ENCODE measurements at regions of chr1 and their contacts with region 1.

Region 1: DNA sequence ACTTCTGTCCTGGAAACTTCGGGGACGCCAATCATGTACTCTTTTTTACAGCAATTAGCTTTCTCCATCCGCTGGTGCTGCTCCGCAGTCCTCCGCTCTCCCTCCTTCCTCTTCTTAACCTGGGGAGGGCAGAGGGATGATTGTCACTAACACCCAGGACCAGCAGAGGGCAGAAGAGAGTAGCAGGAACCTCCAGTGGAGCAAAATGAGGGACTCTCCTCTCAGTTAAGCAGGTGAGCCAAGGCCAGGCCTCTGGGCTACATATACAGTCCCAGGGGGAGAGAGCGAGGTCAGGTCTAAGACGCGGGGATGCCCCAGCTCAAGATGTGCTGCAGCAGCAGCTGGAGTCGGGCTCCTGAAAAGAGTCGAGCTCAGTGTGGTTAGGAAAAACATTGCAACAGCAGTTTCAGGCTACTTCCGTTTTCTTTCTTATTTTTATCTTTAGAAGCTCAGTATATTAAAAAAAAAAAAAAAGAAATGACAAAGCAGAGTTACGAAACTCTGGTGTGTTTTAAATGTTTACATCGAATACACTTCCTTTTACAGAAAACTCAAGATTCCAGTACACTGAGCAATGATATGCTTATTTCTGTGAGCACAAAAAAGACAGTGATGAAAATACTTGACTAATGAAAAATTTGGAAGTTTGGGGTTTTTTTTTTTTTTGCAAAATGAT is 25.7 kb upstream of the NLRP3 start:
- DNase-seq: peak; percentile 92
- ATAC-seq: peak; percentile 98
- H3K4me3 ChIP-seq: no peak overlapping the region
- H3K27ac ChIP-seq: no peak overlapping the region
- H3K4me1 ChIP-seq: peaks cover 33% of the 10 kb centered on the region
- H3K27me3 ChIP-seq: no peaks in the 10 kb centered on the region
- CTCF ChIP-seq: peak; percentile 92 to 95 (median 94)
- EP300 ChIP-seq: peak; percentile 57 to 91; a peak in 3 of 4 replicates
- POLR2A ChIP-seq: no peak
- RAD21 ChIP-seq: peak; percentile 94

Region 2: GRCh38 chr1:247222840-247223239 is 167.4 kb before region 1 on chr1:
- CTCF ChIA-PET with region 1: no interaction called
- POLR2A ChIA-PET with region 1: no interaction called
- RAD21 ChIA-PET with region 1: no interaction called
- SMC1A ChIA-PET with region 1: no interaction called
- in situ Hi-C with region 1: no loop called
- intact Hi-C with region 1: no loop called
- DNase-seq: no peak
- ATAC-seq: no peak; the same call in 2 of the 3 replicates
- H3K4me3 ChIP-seq: no peak overlapping the region
- H3K27ac ChIP-seq: no peak overlapping the region
- H3K4me1 ChIP-seq: no peaks in the 10 kb centered on the region
- H3K27me3 ChIP-seq: no peaks in the 10 kb centered on the region
- CTCF ChIP-seq: no peak
- EP300 ChIP-seq: no peak
- POLR2A ChIP-seq: no peak
- RAD21 ChIP-seq: no peak

Region 3: DNA sequence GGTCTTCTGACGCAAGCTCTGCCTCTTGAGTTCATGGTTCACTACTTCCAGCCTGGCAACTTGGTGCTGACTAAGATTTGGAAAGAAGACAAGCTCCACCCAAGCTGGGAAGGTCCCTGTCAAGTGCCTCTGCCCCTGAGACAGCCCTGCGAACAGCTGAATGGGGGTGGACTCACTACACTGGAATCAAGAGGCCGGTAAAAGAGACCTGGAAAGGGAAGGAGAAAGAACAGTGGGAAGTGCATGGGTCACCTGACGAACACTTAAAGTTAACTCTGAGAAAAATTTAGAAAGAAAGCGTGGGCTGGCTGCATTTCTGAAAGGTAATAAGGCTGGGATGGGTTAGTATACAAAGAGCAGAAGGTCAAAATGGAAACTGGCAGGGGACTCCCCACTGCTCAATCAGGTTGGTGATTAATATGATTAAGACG is 32.5 kb before region 1 on chr1:
- CTCF ChIA-PET with region 1: interaction called, 3 read pairs
- POLR2A ChIA-PET with region 1: interaction called, 3 read pairs
- RAD21 ChIA-PET with region 1: interaction called, 12 read pairs
- SMC1A ChIA-PET with region 1: interaction called, 8 read pairs
- in situ Hi-C with region 1: no loop called
- intact Hi-C with region 1: no loop called
- DNase-seq: peak; percentile 77
- ATAC-seq: peak; percentile 92
- H3K4me3 ChIP-seq: peak overlapping the region; percentile 25; the same call in 1 of the 2 replicates
- H3K27ac ChIP-seq: no peak overlapping the region
- H3K4me1 ChIP-seq: peaks cover 13% of the 10 kb centered on the region
- H3K27me3 ChIP-seq: no peaks in the 10 kb centered on the region
- CTCF ChIP-seq: no peak
- EP300 ChIP-seq: peak; percentile 41 to 69; a peak in 3 of 4 replicates
- POLR2A ChIP-seq: no peak
- RAD21 ChIP-seq: no peak

Region 4: DNA sequence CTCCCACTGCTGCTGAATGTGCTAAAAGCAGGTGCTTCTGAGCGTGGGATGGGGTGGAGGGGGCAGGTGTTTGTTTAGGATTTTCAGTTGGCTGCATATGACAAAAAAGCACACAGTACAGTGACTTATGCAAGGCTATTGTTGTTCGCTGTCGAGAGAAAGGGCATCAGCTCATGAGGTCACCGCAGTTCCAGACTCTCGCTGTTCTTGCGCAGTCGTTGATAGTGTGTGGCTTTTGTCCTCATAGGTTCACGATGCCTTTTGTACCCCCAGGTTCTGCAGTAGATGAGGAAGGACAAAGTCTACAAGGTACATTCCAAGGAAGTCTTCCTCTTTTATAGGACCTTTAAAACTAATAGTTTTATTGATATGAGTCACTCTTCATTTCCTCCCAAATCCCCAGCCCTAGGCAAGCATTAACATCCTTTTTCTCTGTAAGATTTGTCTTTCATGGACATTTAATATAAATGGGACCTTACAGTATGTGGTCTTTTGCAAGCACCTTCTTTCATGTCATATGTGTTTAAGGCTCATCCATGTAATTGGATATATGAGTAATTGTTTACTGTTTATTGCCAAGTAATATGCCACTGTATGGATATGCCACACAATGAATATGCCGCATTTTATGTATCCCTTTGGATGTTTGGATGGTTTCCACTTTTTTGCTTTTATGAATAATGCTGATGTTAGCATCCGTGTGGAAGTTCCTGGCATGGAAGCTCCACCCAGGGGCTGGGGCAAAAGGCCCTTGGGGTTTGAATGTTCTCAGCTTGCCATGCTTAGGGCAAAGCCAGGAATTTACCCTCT is 11.3 kb after region 1 on chr1:
- CTCF ChIA-PET with region 1: interaction called, 18 read pairs
- POLR2A ChIA-PET with region 1: interaction called, 3 read pairs
- RAD21 ChIA-PET with region 1: interaction called, 24 read pairs
- SMC1A ChIA-PET with region 1: interaction called, 15 read pairs
- in situ Hi-C with region 1: no loop called
- intact Hi-C with region 1: no loop called
- DNase-seq: no peak
- ATAC-seq: peak; percentile 49
- H3K4me3 ChIP-seq: no peak overlapping the region
- H3K27ac ChIP-seq: no peak overlapping the region
- H3K4me1 ChIP-seq: no peaks in the 10 kb centered on the region
- H3K27me3 ChIP-seq: no peaks in the 10 kb centered on the region
- CTCF ChIP-seq: no peak
- EP300 ChIP-seq: peak in 1 of 2 experiments; percentile 29; a peak in 1 of 4 replicates
- POLR2A ChIP-seq: no peak
- RAD21 ChIP-seq: no peak

Region 5: DNA sequence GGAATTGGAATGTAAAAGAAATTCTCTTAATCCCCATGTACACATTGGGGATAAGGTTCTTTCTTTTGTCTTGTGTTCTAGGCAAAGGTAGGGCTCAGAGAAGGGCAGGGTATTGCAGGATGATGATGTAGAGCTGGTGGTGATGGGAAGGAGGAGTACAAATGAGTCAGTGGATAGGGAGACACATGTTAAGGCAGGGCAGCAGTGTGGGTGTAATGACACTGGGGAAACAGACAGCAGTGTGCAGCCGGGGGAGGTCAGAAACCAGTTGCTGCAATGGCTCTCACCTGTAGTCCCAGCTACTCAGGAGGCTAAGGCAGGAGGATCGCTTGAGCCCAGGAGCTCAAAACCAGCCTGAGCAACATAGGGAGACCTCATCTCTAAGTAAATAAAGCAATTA is 30.8 kb after region 1 on chr1:
- CTCF ChIA-PET with region 1: interaction called, 13 read pairs
- POLR2A ChIA-PET with region 1: interaction called, 11 read pairs
- RAD21 ChIA-PET with region 1: interaction called, 16 read pairs
- SMC1A ChIA-PET with region 1: interaction called, 28 read pairs
- in situ Hi-C with region 1: no loop called
- intact Hi-C with region 1: no loop called
- DNase-seq: no peak
- ATAC-seq: peak; percentile 70
- H3K4me3 ChIP-seq: no peak overlapping the region
- H3K27ac ChIP-seq: no peak overlapping the region
- H3K4me1 ChIP-seq: peaks cover 5% of the 10 kb centered on the region
- H3K27me3 ChIP-seq: peaks cover 0 to 8% of the 10 kb centered on the region in 2 experiments; a peak in 2 of 4 replicates
- CTCF ChIP-seq: no peak
- EP300 ChIP-seq: no peak
- POLR2A ChIP-seq: no peak
- RAD21 ChIP-seq: no peak

Region 6: GRCh38 chr1:247448107-247448791 is 58.0 kb after region 1 on chr1:
- CTCF ChIA-PET with region 1: interaction called, 31 read pairs
- POLR2A ChIA-PET with region 1: no interaction called
- RAD21 ChIA-PET with region 1: interaction called, 10 read pairs
- SMC1A ChIA-PET with region 1: interaction called, 17 read pairs
- in situ Hi-C with region 1: no loop called
- intact Hi-C with region 1: no loop called
- DNase-seq: no peak
- ATAC-seq: no peak
- H3K4me3 ChIP-seq: no peak overlapping the region
- H3K27ac ChIP-seq: no peak overlapping the region
- H3K4me1 ChIP-seq: no peaks in the 10 kb centered on the region
- H3K27me3 ChIP-seq: no peaks in the 10 kb centered on the region
- CTCF ChIP-seq: no peak
- EP300 ChIP-seq: no peak
- POLR2A ChIP-seq: no peak
- RAD21 ChIP-seq: no peak

Region 7: GRCh38 chr1:247576495-247576894 is 186.2 kb after region 1 on chr1:
- CTCF ChIA-PET with region 1: interaction called, 6 read pairs
- POLR2A ChIA-PET with region 1: no interaction called
- RAD21 ChIA-PET with region 1: interaction called, 17 read pairs
- SMC1A ChIA-PET with region 1: interaction called, 4 read pairs
- in situ Hi-C with region 1: loop called (anchors 5 kb)
- intact Hi-C with region 1: loop called (anchors 1 kb)
- DNase-seq: no peak
- ATAC-seq: peak; percentile 63
- H3K4me3 ChIP-seq: no peak overlapping the region
- H3K27ac ChIP-seq: no peak overlapping the region
- H3K4me1 ChIP-seq: no peaks in the 10 kb centered on the region
- H3K27me3 ChIP-seq: no peaks in the 10 kb centered on the region; a peak in 2 of 4 replicates
- CTCF ChIP-seq: peak; percentile 39 to 57 (median 48)
- EP300 ChIP-seq: no peak
- POLR2A ChIP-seq: no peak
- RAD21 ChIP-seq: peak; percentile 56